CD8-positive, alpha-beta T cell (primary cell): ENCODE measurements at regions of chr3 and their contacts with region 1.

Region 1: DNA sequence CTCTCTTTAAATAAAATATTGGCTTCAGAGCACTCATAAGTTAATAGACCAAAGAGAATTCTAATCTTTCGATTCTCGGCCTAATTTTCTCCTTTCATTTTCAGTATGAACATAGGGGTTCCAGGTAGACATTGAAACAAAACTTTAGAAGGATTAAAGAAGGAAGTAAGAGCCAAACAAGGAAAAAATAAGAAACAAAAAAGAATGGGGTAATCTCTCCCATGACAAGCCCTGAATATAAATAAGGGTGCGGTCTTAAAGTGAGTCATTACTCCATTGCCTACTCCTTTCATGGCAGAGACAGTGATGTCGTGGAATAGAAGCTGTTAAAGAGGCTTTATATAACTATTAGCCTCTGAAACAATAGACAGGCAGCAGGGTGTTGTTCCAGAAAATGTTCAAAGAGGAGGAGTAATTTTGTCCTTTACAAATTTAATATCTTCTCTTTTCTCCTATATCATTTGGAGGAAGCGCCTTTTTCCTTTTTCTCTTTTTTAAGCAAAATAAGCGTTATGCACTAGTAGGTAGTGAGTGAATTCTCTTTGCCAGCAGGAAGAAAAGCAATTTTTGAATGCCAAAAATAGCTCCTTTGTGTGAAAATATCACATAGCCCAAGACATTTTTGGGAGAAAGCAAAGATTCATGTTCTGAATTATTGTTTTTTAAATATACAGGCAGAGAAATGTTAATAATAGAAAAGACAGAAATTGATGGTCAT is 607.9 kb upstream of the KCNMB2 start:
- DNase-seq: no peak
- ATAC-seq: no peak
- H3K4me3 ChIP-seq: no peak overlapping the region
- H3K4me3 Mint-ChIP-seq: no peak overlapping the region
- H3K27ac ChIP-seq: no peak overlapping the region
- H3K27ac Mint-ChIP-seq: no peak overlapping the region
- H3K4me1 ChIP-seq: no peaks in the 10 kb centered on the region
- H3K4me1 Mint-ChIP-seq: no peaks in the 10 kb centered on the region
- H3K27me3 ChIP-seq: no peaks in the 10 kb centered on the region
- H3K27me3 Mint-ChIP-seq: no peaks in the 10 kb centered on the region
- CTCF ChIP-seq: no peak

Region 2: GRCh38 chr3:179116816-179117215 is 1188.5 kb after region 1 on chr3:
- CTCF ChIA-PET with region 1: no interaction called
- POLR2A ChIA-PET with region 1: no interaction called
- intact Hi-C with region 1: loop called in 1 of 2 experiments (anchors 5 kb)
- DNase-seq: no peak
- ATAC-seq: no peak
- H3K4me3 ChIP-seq: no peak overlapping the region
- H3K4me3 Mint-ChIP-seq: no peak overlapping the region
- H3K27ac ChIP-seq: no peak overlapping the region
- H3K27ac Mint-ChIP-seq: no peak overlapping the region
- H3K4me1 ChIP-seq: no peaks in the 10 kb centered on the region
- H3K4me1 Mint-ChIP-seq: no peaks in the 10 kb centered on the region
- H3K27me3 ChIP-seq: no peaks in the 10 kb centered on the region
- H3K27me3 Mint-ChIP-seq: peaks cover 6% of the 10 kb centered on the region
- CTCF ChIP-seq: no peak